Activated T-helper 1 cell treated with anti-CD3 and anti-CD28 coated beads, Interleukin-12 subunit alpha, Interleukin-12 subunit beta, Interleukin-2, Interleukin-4 antibody, amounts not matched to agents 30 ng/mL and 10 ng/mL and 1 ng/mL, durations not matched to agents 14 hours and 24 hours and 36 hours (primary cell): ENCODE measurements at regions of chr17 and their contacts with region 1.

Region 1: DNA sequence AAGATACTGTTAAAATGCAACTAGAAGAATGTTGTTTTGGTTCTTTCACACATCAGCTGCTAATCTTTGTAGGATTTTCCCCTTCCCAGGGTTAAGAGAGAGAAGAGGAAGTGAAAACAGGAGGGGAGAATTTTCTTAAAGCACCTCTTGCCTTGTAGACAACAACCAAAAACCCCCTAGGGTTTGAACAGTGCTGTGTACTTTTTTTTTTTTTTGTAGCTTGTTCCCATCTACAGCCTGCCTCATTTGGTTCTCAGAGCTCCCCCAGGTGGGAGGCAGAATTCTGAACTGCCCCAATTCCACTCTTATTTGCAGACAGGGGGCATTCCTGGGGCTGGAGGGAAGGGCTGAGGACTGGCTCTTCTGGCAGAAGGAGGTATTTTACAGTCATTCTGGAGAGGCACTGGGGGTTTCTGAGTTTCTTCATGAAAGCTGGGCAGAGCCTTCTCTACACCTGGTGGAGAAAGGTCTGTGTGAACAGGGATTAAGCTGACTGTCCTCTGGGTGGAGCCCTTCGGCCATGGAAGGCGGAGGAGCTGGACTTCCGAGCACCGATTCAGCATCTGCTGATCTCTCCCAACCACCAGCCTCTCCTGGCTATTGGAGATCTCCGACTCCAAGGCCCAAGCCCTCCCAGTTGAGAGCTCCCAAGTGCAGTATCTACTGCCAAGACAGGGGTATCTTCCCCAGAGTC is 32.2 kb downstream of the SMARCE1 start:
- DNase-seq: peak; percentile 30
- H3K4me3 Mint-ChIP-seq: peak overlapping the region; percentile 38
- H3K27ac Mint-ChIP-seq: peak overlapping the region; percentile 95
- H3K4me1 Mint-ChIP-seq: peaks cover 84% of the 10 kb centered on the region
- H3K27me3 Mint-ChIP-seq: peaks cover 3% of the 10 kb centered on the region

Region 2: DNA sequence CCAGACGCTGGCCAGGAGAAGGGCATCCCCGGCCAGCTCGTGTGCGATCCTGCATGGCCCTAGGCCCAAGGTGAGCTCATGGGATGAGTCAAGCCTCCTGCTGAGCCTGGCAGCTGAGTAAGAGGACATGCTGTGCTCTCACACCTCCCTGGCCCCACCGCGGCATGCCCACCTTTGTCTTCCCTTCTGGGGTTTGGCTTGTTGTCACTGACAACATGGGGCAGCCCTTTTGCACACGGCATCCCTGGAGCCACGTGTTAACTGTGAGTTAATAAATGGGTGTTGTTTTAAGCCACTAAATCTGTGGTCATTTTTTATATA is 105.2 kb before region 1 on chr17:
- intact Hi-C with region 1: no loop called
- DNase-seq: no peak
- H3K4me3 Mint-ChIP-seq: no peak overlapping the region
- H3K27ac Mint-ChIP-seq: no peak overlapping the region
- H3K4me1 Mint-ChIP-seq: peaks cover 27% of the 10 kb centered on the region
- H3K27me3 Mint-ChIP-seq: no peaks in the 10 kb centered on the region

Region 3: GRCh38 chr17:40582328-40582901 is 33.0 kb before region 1 on chr17:
- intact Hi-C with region 1: loop called (anchors 2 kb)
- DNase-seq: peak; percentile 58
- H3K4me3 Mint-ChIP-seq: peak overlapping the region; percentile 8
- H3K27ac Mint-ChIP-seq: peak overlapping the region; percentile 79
- H3K4me1 Mint-ChIP-seq: peaks cover 81% of the 10 kb centered on the region
- H3K27me3 Mint-ChIP-seq: no peaks in the 10 kb centered on the region

Region 4: DNA sequence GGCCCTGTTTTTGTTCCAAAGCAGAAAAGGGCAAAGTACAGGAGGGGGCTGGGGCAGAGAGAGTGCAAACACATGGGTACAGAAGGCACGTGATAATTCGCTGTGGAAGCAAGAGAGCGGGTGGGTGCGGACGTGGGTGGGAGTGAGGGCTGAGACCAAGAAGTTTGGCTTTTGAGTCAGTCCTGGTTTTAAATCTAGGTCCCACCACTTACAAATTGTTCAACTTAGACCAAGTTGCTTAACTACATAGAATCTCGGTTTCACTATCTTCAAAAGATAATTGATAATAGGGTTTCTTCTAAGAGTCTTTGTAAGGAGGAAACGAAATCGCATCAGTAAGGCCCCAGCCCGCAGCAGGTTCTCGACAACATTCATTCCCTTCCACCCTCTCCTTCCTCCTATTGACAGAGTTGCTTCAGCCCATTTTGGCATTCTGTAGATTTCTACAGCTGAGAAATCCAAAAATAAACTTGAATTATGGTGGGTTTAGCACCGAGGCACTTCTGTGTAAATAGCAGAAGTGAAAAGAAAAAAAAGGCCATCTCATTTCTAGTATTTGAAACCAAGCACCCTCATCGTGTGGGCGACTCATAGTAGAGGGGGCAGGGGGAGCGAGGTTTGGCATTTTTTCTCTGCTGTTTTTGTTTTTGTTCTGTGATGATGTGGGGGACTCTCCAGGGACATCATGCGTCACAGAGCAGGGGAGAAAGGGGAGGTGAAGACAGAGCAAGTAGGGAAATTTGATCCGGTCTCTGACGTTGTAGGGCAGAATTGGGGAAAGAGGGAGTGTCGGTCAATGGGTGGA is 16.6 kb before region 1 on chr17:
- intact Hi-C with region 1: loop called (anchors 1 kb)
- DNase-seq: peak; percentile 56
- H3K4me3 Mint-ChIP-seq: peak overlapping the region; percentile 46
- H3K27ac Mint-ChIP-seq: peak overlapping the region; percentile 89
- H3K4me1 Mint-ChIP-seq: peaks cover 87% of the 10 kb centered on the region
- H3K27me3 Mint-ChIP-seq: no peaks in the 10 kb centered on the region

Region 5: DNA sequence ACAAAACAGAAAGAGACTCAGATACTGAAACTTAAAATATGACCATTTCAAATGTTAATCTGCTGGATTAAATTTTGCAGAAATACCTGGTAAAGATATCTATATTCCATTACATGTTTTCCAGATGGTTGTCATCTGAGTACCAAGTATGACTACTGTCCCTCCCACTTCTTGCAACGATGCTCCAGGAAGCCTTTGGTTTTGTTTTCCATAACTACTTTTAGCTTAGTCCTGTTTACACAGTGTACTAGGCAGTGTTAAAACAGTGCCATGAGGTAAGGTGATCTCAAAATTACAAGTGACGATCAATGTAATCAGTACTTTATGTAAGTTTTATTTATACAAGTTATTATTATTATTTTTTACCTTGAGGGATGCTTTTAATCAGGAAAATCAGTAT is 14.4 kb after region 1 on chr17:
- intact Hi-C with region 1: loop called (anchors 1 kb)
- DNase-seq: no peak
- H3K4me3 Mint-ChIP-seq: no peak overlapping the region
- H3K27ac Mint-ChIP-seq: peak overlapping the region; percentile 74
- H3K4me1 Mint-ChIP-seq: peaks cover 31% of the 10 kb centered on the region
- H3K27me3 Mint-ChIP-seq: no peaks in the 10 kb centered on the region

Region 6: DNA sequence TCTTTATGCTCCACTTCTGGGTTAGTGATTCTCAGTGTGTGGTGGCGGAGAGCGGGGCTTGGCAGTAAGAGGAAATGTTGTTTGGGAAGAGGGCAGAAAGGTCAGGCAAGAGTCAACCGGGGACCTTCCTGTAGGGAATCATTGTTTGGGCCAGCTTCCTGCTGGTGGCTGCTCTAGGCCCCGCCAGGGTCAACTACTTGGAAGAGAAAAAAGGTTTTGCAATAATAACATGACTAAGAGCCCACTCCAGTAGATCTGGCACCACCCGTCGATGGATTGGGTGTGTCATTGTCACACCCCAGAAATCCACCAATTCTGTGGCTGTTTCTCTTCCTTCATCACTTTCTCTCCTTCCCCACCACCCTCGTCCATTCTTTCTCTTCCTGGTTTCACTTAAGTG is 92.3 kb after region 1 on chr17:
- intact Hi-C with region 1: no loop called
- DNase-seq: no peak
- H3K4me3 Mint-ChIP-seq: no peak overlapping the region
- H3K27ac Mint-ChIP-seq: no peak overlapping the region
- H3K4me1 Mint-ChIP-seq: no peaks in the 10 kb centered on the region
- H3K27me3 Mint-ChIP-seq: peaks cover 19% of the 10 kb centered on the region

Region 7: GRCh38 chr17:40726919-40727318 is 111.5 kb after region 1 on chr17:
- intact Hi-C with region 1: loop called (anchors 1 kb)
- DNase-seq: no peak
- H3K4me3 Mint-ChIP-seq: no peak overlapping the region
- H3K27ac Mint-ChIP-seq: no peak overlapping the region
- H3K4me1 Mint-ChIP-seq: no peaks in the 10 kb centered on the region
- H3K27me3 Mint-ChIP-seq: peaks cover 28% of the 10 kb centered on the region

Region 8: GRCh38 chr17:41291306-41291705 is 675.9 kb after region 1 on chr17:
- intact Hi-C with region 1: no loop called
- DNase-seq: no peak
- H3K4me3 Mint-ChIP-seq: no peak overlapping the region
- H3K27ac Mint-ChIP-seq: no peak overlapping the region
- H3K4me1 Mint-ChIP-seq: no peaks in the 10 kb centered on the region
- H3K27me3 Mint-ChIP-seq: peaks cover 7% of the 10 kb centered on the region